Dendritic cell treated with granulocyte-macrophage colony-stimulating factor and Interleukin-4, amounts not matched to agents 40 ng/mL and 50 ng/mL, for 4 days (primary cell): ENCODE measurements at regions of chr7 and their contacts with region 1.

Region 1: DNA sequence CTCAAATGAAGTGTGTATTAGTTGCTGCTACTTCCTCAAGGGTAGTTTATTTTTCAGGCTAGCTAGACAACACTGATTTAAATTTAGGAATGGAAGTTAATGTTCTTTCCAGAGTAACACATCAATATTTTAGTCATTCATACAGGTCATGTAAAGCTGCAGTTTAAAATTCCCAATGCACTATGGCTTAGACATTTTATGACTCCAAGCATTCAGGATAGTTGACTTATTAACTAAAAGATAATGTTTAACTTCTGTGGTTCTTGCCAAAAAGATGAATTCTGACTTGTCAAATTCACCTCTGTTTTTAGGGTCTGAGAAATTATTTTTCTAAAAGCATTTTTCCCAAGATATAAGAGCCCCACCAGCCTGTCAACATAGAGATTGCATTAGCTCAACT is 131.9 kb downstream of the TFPI2 start:
- H3K4me3 Mint-ChIP-seq: no peak overlapping the region
- H3K27ac Mint-ChIP-seq: no peak overlapping the region
- H3K4me1 Mint-ChIP-seq: no peaks in the 10 kb centered on the region
- H3K27me3 Mint-ChIP-seq: no peaks in the 10 kb centered on the region

Region 2: DNA sequence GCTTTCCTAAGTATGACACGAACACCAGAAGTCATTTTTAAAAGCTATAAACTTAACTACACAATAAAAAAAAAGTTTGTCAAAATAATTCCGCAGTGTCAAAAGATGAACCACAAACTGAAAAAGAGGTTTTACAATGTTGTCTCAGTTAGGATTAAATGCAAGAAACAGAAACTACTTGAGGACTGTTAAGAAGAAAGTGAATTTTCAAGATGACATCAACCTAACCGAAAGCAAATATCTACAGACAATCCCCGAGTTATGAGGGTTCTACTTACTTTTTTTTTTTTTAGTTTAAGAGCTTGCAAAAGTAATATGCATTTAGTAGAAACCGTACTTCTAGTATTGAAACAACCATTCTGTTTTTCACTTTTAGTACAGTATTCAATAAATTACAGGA is 69.6 kb after region 1 on chr7:
- intact Hi-C with region 1: loop called (anchors 2 kb)
- H3K4me3 Mint-ChIP-seq: no peak overlapping the region
- H3K27ac Mint-ChIP-seq: no peak overlapping the region
- H3K4me1 Mint-ChIP-seq: no peaks in the 10 kb centered on the region
- H3K27me3 Mint-ChIP-seq: no peaks in the 10 kb centered on the region

Region 3: DNA sequence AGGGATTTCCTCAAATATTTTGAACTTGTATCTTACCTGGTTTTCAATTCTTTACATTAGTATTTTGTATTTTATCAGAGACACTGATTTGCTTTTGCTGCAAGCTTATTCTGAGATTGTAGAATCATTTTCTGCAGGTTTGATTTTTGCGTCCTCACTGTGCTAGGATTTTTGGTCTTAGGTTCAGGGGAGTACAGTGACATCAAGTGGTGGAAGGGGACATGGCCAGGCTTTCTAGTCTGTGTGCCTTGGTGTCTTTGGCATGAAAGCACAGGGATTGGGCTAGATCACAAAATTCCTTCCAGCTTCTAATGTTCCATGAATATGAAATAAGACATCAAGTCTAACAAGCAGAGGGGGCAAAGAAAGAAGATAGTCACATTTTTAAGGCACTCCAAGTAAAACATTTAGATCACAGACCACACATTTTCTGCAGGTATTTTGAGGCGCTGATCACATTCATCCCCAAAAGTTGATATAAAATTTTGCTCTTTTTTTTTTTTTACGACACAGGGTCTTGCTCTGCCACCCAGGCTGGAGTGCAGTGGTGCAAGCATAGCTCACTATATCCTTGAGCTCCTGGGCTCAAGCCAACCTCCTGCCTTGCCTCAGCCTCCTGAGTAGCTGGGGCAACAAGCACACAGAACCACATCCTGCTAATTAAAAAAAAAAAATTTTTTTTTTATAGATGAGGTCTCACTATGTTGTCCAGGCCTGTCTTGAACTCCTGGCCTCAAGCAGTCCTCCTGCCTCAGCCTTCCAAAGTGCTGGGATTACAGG is 1441.3 kb after region 1 on chr7:
- intact Hi-C with region 1: no loop called
- H3K4me3 Mint-ChIP-seq: no peak overlapping the region
- H3K27ac Mint-ChIP-seq: no peak overlapping the region
- H3K4me1 Mint-ChIP-seq: no peaks in the 10 kb centered on the region
- H3K27me3 Mint-ChIP-seq: no peaks in the 10 kb centered on the region